CD8-positive, alpha-beta memory T cell (primary cell): ENCODE measurements at regions of chr1 and their contacts with region 1.

Region 1: DNA sequence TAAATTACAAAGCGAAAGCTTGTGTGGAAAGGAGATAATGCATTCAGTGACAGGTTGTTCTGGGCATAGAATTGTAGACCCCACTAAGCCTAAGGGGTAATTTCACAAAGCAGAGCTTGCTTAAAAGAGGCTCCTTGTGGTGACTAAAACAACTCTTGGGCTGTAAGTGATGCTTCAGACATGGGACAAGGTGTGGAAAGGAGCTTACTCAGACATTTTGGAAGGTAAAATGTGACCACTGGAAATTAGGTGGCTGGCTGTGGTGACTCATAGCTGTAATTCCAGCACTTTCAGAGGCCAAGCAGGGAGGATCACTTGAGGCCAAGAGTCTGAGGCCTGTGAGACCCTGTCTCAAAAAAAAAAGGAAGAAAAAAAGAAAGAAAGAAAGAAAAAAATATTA is 51.1 kb upstream of the LRRC8C start:
- DNase-seq: no peak
- H3K4me3 ChIP-seq: no peak overlapping the region
- H3K4me3 Mint-ChIP-seq: no peak overlapping the region
- H3K27ac ChIP-seq: no peak overlapping the region
- H3K27ac Mint-ChIP-seq: peak overlapping the region in 2 of 8 donors; percentile 61 to 83
- H3K4me1 ChIP-seq: no peaks in the 10 kb centered on the region
- H3K4me1 Mint-ChIP-seq: peaks cover 6 to 20% (median 9%) of the 10 kb centered on the region in 3 donors
- H3K27me3 ChIP-seq: no peaks in the 10 kb centered on the region
- H3K27me3 Mint-ChIP-seq: no peaks in the 10 kb centered on the region

Region 2: DNA sequence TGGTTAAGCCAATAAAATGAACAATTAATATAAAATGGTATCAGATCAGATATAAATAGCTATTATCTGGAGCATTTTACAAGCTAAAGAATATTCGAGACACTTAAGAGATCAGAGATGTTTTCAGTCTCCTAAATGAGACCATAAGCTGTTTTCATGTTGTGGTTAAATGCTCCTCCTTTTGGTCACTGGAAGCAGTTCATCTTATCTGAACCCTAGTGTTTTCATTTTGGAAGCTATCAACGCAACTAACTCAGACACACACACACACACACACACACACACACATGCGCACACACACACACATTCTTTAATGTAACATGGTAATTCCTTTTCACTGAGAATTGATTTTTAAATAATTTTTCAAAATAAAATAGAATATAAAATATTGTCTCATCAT is 41.0 kb after region 1 on chr1:
- CTCF ChIA-PET with region 1: interaction called, 14 read pairs
- POLR2A ChIA-PET with region 1: no interaction called
- DNase-seq: peak in 1 of 5 donors; percentile 32
- H3K4me3 ChIP-seq: no peak overlapping the region
- H3K4me3 Mint-ChIP-seq: peak overlapping the region in 1 of 7 donors; percentile 14
- H3K27ac ChIP-seq: no peak overlapping the region
- H3K27ac Mint-ChIP-seq: peak overlapping the region in 1 of 8 donors; percentile 76
- H3K4me1 ChIP-seq: peaks cover 32% of the 10 kb centered on the region
- H3K4me1 Mint-ChIP-seq: peaks cover 35 to 75% (median 73%) of the 10 kb centered on the region in 3 donors
- H3K27me3 ChIP-seq: no peaks in the 10 kb centered on the region
- H3K27me3 Mint-ChIP-seq: no peaks in the 10 kb centered on the region